PC-9 (cell line): ENCODE measurements at regions of chr3 and their contacts with region 1.

Region 1: GRCh38 chr3:49673715-49674496 is at the start of gene APEH:
- DNase-seq: peak; percentile 93 to 99
- H3K4me3 ChIP-seq: peak within 1 kb of the TSS; percentile 86
- H3K27ac ChIP-seq: peak within 1 kb of the TSS; percentile 94
- H3K4me1 ChIP-seq: peaks cover 20% of the 10 kb centered on the region
- H3K27me3 ChIP-seq: no peaks in the 10 kb centered on the region
- CTCF ChIP-seq: no peak
- total RNA-seq, gene APEH: 131 TPM in 2 replicates

Region 2: GRCh38 chr3:49351521-49352011 is 322.3 kb before region 1 on chr3:
- CTCF ChIA-PET with region 1: no interaction called
- POLR2A ChIA-PET with region 1: no interaction called
- intact Hi-C with region 1: loop called (anchors 5 kb)
- DNase-seq: peak; percentile 53 to 88
- H3K4me3 ChIP-seq: no peak overlapping the region; the same call in 1 of the 2 replicates
- H3K27ac ChIP-seq: peak overlapping the region; percentile 81
- H3K4me1 ChIP-seq: peaks cover 69% of the 10 kb centered on the region
- H3K27me3 ChIP-seq: no peaks in the 10 kb centered on the region
- CTCF ChIP-seq: no peak

Region 3: DNA sequence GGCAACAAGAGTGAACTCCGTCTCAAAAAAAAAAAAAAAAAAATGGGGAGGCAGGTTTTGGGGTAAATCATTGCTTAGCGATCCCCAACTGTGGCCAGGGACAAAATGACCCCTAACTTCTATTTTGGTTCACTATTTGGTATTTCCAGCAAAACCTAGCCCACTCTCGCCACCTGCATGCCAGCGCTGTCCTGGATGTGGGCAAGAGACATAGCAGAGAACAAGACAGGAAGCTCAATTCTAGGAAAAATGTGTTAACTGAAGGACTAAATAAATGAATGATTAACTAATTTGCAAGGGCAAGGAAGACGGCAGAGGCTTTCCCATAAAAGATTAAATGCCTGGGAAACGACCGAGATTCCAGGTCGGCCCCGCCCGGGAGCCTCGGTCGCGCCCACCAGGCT is 245.2 kb before region 1 on chr3:
- CTCF ChIA-PET with region 1: no interaction called
- POLR2A ChIA-PET with region 1: no interaction called
- intact Hi-C with region 1: no loop called
- DNase-seq: no peak
- H3K4me3 ChIP-seq: peak overlapping the region; percentile 67
- H3K27ac ChIP-seq: no peak overlapping the region
- H3K4me1 ChIP-seq: 0 out of 2 replicates have a peak, but pooled peaks cover 4% of the 10 kb centered on the region
- H3K27me3 ChIP-seq: no peaks in the 10 kb centered on the region
- CTCF ChIP-seq: no peak

Region 4: DNA sequence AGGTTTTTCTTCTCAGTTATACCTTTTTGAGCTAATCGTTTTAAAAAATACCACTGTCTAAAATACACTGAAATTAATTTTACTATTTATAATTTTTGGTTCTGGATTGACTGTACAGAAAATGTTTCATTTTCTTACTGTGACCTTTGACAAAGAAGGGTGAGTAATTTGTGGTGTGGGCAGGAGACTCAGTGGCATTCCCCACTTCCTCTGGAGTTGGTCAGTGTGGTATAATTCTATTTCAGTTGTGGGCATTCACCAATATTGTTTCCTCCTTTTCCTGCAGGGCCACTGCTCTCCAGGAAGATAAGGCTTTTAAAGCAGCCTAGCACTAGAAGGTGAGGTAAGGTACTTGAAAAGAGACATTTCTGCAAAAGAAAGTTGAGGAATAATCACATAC is 197.3 kb before region 1 on chr3:
- CTCF ChIA-PET with region 1: no interaction called
- POLR2A ChIA-PET with region 1: no interaction called
- intact Hi-C with region 1: no loop called
- DNase-seq: no peak
- H3K4me3 ChIP-seq: no peak overlapping the region
- H3K27ac ChIP-seq: peak overlapping the region; percentile 49
- H3K4me1 ChIP-seq: peaks cover 18% of the 10 kb centered on the region
- H3K27me3 ChIP-seq: no peaks in the 10 kb centered on the region
- CTCF ChIP-seq: no peak

Region 5: DNA sequence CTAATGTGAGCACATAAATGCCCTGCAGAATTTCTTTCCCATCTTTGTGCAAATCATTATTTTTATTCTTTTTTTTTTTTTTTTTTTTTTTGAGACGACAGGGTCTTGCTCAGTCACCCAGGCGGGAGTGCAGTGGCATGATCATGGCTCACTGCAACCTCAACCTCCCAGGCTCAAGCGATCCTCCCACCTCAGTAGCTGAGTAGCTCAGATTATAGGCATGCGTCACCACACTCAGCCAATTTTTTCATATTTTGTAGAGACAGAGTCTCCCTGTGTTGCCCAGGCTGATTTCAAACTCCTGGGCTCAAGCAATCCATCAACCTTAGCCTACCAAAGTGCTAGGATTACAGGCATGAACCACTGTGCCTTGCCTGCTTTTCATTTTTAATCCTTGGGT is 180.9 kb before region 1 on chr3:
- CTCF ChIA-PET with region 1: interaction called, 13 read pairs
- POLR2A ChIA-PET with region 1: no interaction called
- intact Hi-C with region 1: no loop called
- DNase-seq: no peak
- H3K4me3 ChIP-seq: no peak overlapping the region
- H3K27ac ChIP-seq: no peak overlapping the region
- H3K4me1 ChIP-seq: no peaks in the 10 kb centered on the region
- H3K27me3 ChIP-seq: no peaks in the 10 kb centered on the region
- CTCF ChIP-seq: no peak

Region 6: DNA sequence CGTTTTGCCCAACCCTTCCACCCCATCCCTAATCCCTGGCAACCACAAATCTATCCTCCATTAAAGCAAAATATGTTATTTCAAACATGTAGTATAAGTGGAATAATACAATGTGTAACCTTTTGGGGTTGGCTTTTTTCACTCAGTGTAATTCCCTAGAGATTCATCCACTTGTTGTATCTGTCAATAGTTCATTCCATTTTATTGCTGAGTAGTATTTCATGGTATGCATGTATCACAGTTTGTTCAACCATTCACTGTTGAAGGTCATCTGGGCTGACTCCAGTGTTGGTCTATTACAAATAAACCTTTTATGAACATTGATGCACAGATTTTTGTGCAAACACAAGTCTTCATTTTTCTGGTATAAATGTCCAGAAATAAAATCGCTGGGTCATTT is 80.9 kb before region 1 on chr3:
- CTCF ChIA-PET with region 1: interaction called, 6 read pairs
- POLR2A ChIA-PET with region 1: no interaction called
- intact Hi-C with region 1: loop called (anchors 5 kb)
- DNase-seq: no peak
- H3K4me3 ChIP-seq: no peak overlapping the region
- H3K27ac ChIP-seq: no peak overlapping the region
- H3K4me1 ChIP-seq: no peaks in the 10 kb centered on the region
- H3K27me3 ChIP-seq: no peaks in the 10 kb centered on the region
- CTCF ChIP-seq: no peak

Region 7: GRCh38 chr3:49723628-49724551 is 50.0 kb after region 1 on chr3 and contains the start of gene GMPPB:
- CTCF ChIA-PET with region 1: no interaction called
- POLR2A ChIA-PET with region 1: no interaction called
- intact Hi-C with region 1: loop called (anchors 2 kb)
- DNase-seq: peak; percentile 93 to 96
- H3K4me3 ChIP-seq: peak within 1 kb of the TSS; percentile 86
- H3K27ac ChIP-seq: peak within 1 kb of the TSS; percentile 78
- H3K4me1 ChIP-seq: peaks cover 13% of the 10 kb centered on the region; the same call in 1 of the 2 replicates
- H3K27me3 ChIP-seq: no peaks in the 10 kb centered on the region
- CTCF ChIP-seq: no peak
- total RNA-seq, gene GMPPB: 20.4 and 24.2 TPM in 2 replicates

Region 8: DNA sequence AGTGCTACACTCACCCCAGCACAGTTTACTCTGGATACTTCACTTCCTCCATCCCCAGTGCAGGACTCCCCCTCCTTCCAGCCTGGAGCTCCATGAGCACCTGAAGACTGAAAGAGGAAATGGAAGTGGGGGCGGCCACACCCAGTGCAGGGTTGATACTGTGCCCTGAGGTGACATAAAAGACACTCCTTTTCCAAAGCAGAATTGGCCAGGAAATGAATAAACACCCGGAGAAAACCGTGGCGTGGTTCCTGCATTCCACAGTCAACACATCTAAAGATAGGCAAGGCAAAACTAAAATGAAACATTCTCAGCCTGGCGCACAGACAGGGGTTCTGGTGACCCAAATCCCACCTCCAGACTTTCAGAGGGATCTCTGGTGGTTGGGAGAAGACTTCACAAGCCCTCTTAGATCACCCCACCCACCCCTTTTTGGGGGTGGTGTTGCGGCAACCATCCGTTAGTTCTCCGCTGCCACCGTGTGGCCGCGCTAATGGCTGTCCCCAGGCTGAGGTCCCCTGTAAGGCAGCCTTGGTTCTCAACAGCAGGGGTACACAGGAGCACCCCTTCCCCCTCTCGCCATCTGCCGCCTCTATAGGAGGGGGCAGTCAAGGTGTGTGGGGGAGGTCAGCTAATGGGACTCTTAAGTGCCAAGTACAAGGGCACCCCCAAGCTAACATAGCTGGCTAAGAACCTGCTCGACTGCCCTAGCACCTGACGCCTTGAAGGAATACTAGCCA is 232.3 kb after region 1 on chr3:
- CTCF ChIA-PET with region 1: no interaction called
- POLR2A ChIA-PET with region 1: interaction called, 26 read pairs
- intact Hi-C with region 1: no loop called
- DNase-seq: peak; percentile 73 to 78
- H3K4me3 ChIP-seq: peak overlapping the region; percentile 43; the same call in 1 of the 2 replicates
- H3K27ac ChIP-seq: peak overlapping the region; percentile 50
- H3K4me1 ChIP-seq: peaks cover 38% of the 10 kb centered on the region
- H3K27me3 ChIP-seq: no peaks in the 10 kb centered on the region
- CTCF ChIP-seq: peak; percentile 70